Heart right ventricle (tissue), 16 donors: ENCODE measurements at regions of chr7 and their contacts with region 1.

Region 1: DNA sequence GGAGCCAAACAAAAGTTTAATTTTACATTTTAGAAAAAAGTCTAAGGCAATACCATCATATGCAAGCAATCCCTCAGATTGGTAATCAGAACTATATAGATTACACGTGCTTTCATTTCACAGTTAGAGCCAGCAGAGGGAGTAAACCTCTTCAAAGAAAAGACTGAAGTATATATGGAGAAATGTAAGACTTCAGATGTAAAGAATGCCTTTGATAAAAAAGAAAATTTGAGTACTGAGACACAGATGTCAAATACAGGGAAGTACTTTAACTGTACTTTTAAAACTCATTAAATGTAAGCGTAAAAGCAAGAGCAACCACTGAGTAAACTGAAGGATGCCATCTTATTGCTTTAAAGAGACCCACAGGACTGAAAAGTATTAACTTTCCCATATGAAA is 101.4 kb upstream of the FAM133B start:
- DNase-seq: no peak
- ATAC-seq: peak in 1 of 8 donors; percentile 47
- H3K4me3 ChIP-seq: no peak overlapping the region
- H3K27ac ChIP-seq: no peak overlapping the region
- H3K4me1 ChIP-seq: peaks cover 0 to 29% (median 16%) of the 10 kb centered on the region in 9 donors
- H3K27me3 ChIP-seq: no peaks in the 10 kb centered on the region
- CTCF ChIP-seq: peak; percentile 31 to 71 (median 54)

Region 2: GRCh38 chr7:92633211-92633906 is 58.2 kb before region 1 on chr7:
- intact Hi-C with region 1: loop called in 5 of 10 experiments (anchors 5 to 10 kb)
- DNase-seq: peak in 1 of 2 donors; percentile 23
- ATAC-seq: peak; percentile 80 to 93 (median 90)
- H3K4me3 ChIP-seq: peak overlapping the region in 1 of 10 donors; percentile 2
- H3K27ac ChIP-seq: peak overlapping the region; percentile 13 to 70 (median 50)
- H3K4me1 ChIP-seq: peaks cover 9 to 57% (median 52%) of the 10 kb centered on the region in 9 donors
- H3K27me3 ChIP-seq: no peaks in the 10 kb centered on the region
- CTCF ChIP-seq: no peak

Region 3: GRCh38 chr7:92645114-92646061 is 46.2 kb before region 1 on chr7:
- intact Hi-C with region 1: no loop called
- DNase-seq: no peak
- ATAC-seq: peak; percentile 21 to 78 (median 56)
- H3K4me3 ChIP-seq: no peak overlapping the region
- H3K27ac ChIP-seq: peak overlapping the region in 9 of 10 donors; percentile 9 to 59 (median 42)
- H3K4me1 ChIP-seq: peaks cover 18 to 56% (median 29%) of the 10 kb centered on the region in 9 donors
- H3K27me3 ChIP-seq: no peaks in the 10 kb centered on the region
- CTCF ChIP-seq: no peak

Region 4: DNA sequence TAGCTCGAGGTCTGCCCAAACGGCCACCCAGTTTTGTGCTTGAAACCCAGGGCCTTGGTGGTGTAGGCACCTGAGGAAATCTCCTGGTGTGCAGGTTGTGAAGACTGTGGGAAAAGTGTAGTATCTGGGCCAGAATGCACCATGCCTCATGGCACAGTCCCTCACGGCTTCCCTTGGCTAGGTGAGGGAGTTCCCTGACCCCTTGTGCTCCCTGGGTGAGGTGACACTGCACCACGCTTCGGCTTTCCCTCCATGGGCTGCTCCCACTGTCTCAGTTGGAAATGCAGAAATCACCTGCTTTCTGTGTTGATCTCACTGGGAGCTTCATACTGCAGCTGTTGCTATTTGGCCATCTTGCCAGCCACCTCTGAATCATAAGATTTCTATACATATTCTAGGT is 207.2 kb after region 1 on chr7:
- intact Hi-C with region 1: no loop called
- DNase-seq: no peak
- ATAC-seq: no peak
- H3K4me3 ChIP-seq: no peak overlapping the region
- H3K27ac ChIP-seq: no peak overlapping the region
- H3K4me1 ChIP-seq: no peaks in the 10 kb centered on the region
- H3K27me3 ChIP-seq: no peaks in the 10 kb centered on the region
- CTCF ChIP-seq: no peak